Activated T-helper 1 cell treated with anti-CD3 and anti-CD28 coated beads, Interleukin-12 subunit alpha, Interleukin-12 subunit beta, Interleukin-2, Interleukin-4 antibody, amounts not matched to agents 30 ng/mL and 10 ng/mL and 1 ng/mL, durations not matched to agents 14 hours and 24 hours and 36 hours (primary cell): ENCODE measurements at regions of chr15 and their contacts with region 1.

Region 1: GRCh38 chr15:84981054-84981710 is 474 bp upstream of the PDE8A start:
- DNase-seq: peak; percentile 96
- H3K4me3 Mint-ChIP-seq: peak overlapping the region; percentile 95
- H3K27ac Mint-ChIP-seq: peak overlapping the region; percentile 93
- H3K4me1 Mint-ChIP-seq: peaks cover 40% of the 10 kb centered on the region
- H3K27me3 Mint-ChIP-seq: peaks cover 18% of the 10 kb centered on the region

Region 2: GRCh38 chr15:84588053-84588874 is 392.9 kb before region 1 on chr15:
- intact Hi-C with region 1: loop called (anchors 1 kb)
- DNase-seq: peak; percentile 78
- H3K4me3 Mint-ChIP-seq: peak overlapping the region; percentile 62
- H3K27ac Mint-ChIP-seq: no peak overlapping the region
- H3K4me1 Mint-ChIP-seq: peaks cover 7% of the 10 kb centered on the region
- H3K27me3 Mint-ChIP-seq: peaks cover 21% of the 10 kb centered on the region

Region 3: DNA sequence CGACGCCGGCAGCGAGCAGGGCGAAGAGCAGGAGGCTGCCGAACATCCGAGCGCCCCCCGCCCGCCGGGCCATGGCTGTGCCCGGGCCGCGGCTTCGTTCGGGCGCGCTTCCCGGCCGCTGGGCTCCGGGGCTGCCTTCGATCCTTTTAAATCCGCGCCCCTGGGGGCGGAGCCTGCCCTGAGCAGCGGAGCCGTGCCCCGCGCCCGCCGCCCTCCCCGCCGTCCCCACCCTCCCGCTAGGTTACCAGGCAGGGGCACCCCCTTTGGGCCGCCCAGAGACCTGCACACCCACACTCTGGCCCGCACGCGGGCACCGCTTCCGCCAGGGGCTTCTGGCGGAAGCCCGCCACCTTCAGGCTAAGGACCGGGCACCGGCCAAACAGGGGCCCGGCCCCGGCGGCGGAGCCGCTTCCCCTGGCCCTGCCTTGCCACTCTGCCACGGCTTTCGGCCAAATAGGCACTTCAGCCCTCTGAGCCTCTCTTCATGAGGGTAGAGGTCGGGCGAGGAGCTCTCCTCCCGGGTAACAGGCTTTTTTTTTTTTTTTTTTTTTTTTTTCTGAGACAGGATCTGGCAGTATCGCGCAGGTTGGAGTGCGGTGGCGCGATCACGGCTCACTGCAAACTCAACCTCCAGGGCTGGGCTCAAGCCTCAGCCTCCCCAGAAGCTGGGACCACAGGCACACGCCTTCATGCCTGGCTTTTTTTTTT is 322.9 kb before region 1 on chr15 and contains the start of gene NMB:
- intact Hi-C with region 1: loop called (anchors 1 kb)
- DNase-seq: peak; percentile 73
- H3K4me3 Mint-ChIP-seq: peak within 1 kb of the TSS; percentile 73
- H3K27ac Mint-ChIP-seq: peak within 1 kb of the TSS; percentile 56
- H3K4me1 Mint-ChIP-seq: peaks cover 26% of the 10 kb centered on the region
- H3K27me3 Mint-ChIP-seq: peaks cover 2% of the 10 kb centered on the region
- total RNA-seq, gene NMB: 3.0 and 3.5 TPM in 2 replicates

Region 4: GRCh38 chr15:84929744-84930371 is 51.3 kb before region 1 on chr15:
- intact Hi-C with region 1: loop called (anchors 2 kb)
- DNase-seq: no peak
- H3K4me3 Mint-ChIP-seq: no peak overlapping the region
- H3K27ac Mint-ChIP-seq: no peak overlapping the region
- H3K4me1 Mint-ChIP-seq: peaks cover 6% of the 10 kb centered on the region
- H3K27me3 Mint-ChIP-seq: no peaks in the 10 kb centered on the region

Region 5: GRCh38 chr15:85073556-85074194 is 92.5 kb after region 1 on chr15:
- intact Hi-C with region 1: loop called (anchors 2 kb)
- DNase-seq: no peak
- H3K4me3 Mint-ChIP-seq: no peak overlapping the region
- H3K27ac Mint-ChIP-seq: peak overlapping the region; percentile 87
- H3K4me1 Mint-ChIP-seq: peaks cover 13% of the 10 kb centered on the region
- H3K27me3 Mint-ChIP-seq: no peaks in the 10 kb centered on the region

Region 6: GRCh38 chr15:85794603-85795336 is 813.6 kb after region 1 on chr15 and contains the start of gene KLHL25:
- intact Hi-C with region 1: loop called (anchors 5 kb)
- DNase-seq: peak; percentile 92
- H3K4me3 Mint-ChIP-seq: peak within 1 kb of the TSS; percentile 91
- H3K27ac Mint-ChIP-seq: peak within 1 kb of the TSS; percentile 83
- H3K4me1 Mint-ChIP-seq: peaks cover 31% of the 10 kb centered on the region
- H3K27me3 Mint-ChIP-seq: peaks cover 4% of the 10 kb centered on the region
- total RNA-seq, gene KLHL25: 10.7 and 11.0 TPM in 2 replicates